CD4-positive, alpha-beta T cell (primary cell): ENCODE measurements at regions of chr5 and their contacts with region 1.

Region 1: GRCh38 chr5:141935538-141935937 is 11.9 kb downstream of the DELE1 start:
- DNase-seq: no peak
- ATAC-seq: no peak
- H3K4me3 ChIP-seq: no peak overlapping the region
- H3K4me3 Mint-ChIP-seq: no peak overlapping the region
- H3K27ac ChIP-seq: no peak overlapping the region
- H3K27ac Mint-ChIP-seq: no peak overlapping the region
- H3K4me1 ChIP-seq: no peaks in the 10 kb centered on the region
- H3K4me1 Mint-ChIP-seq: no peaks in the 10 kb centered on the region
- H3K27me3 ChIP-seq: no peaks in the 10 kb centered on the region
- H3K27me3 Mint-ChIP-seq: no peaks in the 10 kb centered on the region
- CTCF ChIP-seq: no peak

Region 2: GRCh38 chr5:141590127-141590526 is 345.4 kb before region 1 on chr5:
- CTCF ChIA-PET with region 1: no interaction called
- POLR2A ChIA-PET with region 1: no interaction called
- intact Hi-C with region 1: no loop called
- DNase-seq: peak in 1 of 14 experiments; percentile 24
- ATAC-seq: no peak
- H3K4me3 ChIP-seq: no peak overlapping the region
- H3K4me3 Mint-ChIP-seq: no peak overlapping the region
- H3K27ac ChIP-seq: no peak overlapping the region
- H3K27ac Mint-ChIP-seq: no peak overlapping the region
- H3K4me1 ChIP-seq: peaks cover 21% of the 10 kb centered on the region
- H3K4me1 Mint-ChIP-seq: peaks cover 73% of the 10 kb centered on the region
- H3K27me3 ChIP-seq: no peaks in the 10 kb centered on the region
- H3K27me3 Mint-ChIP-seq: no peaks in the 10 kb centered on the region
- CTCF ChIP-seq: no peak

Region 3: DNA sequence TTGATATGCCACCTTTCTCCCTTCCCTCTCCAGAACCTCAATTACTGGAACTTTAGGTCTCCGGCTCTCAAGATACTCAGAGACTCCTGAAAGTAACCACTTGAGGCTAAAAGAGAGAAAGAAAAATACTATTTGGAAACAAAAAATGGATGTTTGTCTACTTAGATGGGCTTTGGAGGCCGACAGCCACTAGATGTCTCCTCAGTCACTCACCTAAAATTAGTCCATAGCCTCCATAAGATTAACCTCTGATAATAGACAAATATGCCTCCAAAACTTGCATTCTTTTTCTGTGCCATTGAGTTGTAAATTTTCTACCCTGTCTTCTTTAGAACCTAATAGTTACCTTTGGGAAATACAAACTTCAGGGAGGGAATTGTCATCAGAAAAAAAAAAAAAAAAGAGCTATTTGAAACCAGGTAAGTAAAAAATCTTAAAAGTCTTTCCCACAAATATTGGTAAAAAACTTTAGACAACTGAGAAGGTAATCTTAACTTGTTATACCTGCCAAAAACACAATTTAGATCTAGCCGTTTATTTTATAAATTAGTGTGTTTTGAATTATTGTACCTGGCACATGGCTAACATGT is 46.2 kb before region 1 on chr5:
- CTCF ChIA-PET with region 1: no interaction called
- POLR2A ChIA-PET with region 1: no interaction called
- intact Hi-C with region 1: loop called in 1 of 2 experiments (anchors 5 kb)
- DNase-seq: no peak
- ATAC-seq: no peak
- H3K4me3 ChIP-seq: no peak overlapping the region
- H3K4me3 Mint-ChIP-seq: no peak overlapping the region
- H3K27ac ChIP-seq: no peak overlapping the region
- H3K27ac Mint-ChIP-seq: no peak overlapping the region
- H3K4me1 ChIP-seq: no peaks in the 10 kb centered on the region
- H3K4me1 Mint-ChIP-seq: no peaks in the 10 kb centered on the region
- H3K27me3 ChIP-seq: peaks cover 8 to 10% of the 10 kb centered on the region in 2 experiments
- H3K27me3 Mint-ChIP-seq: peaks cover 45% of the 10 kb centered on the region
- CTCF ChIP-seq: peak; percentile 8

Region 4: DNA sequence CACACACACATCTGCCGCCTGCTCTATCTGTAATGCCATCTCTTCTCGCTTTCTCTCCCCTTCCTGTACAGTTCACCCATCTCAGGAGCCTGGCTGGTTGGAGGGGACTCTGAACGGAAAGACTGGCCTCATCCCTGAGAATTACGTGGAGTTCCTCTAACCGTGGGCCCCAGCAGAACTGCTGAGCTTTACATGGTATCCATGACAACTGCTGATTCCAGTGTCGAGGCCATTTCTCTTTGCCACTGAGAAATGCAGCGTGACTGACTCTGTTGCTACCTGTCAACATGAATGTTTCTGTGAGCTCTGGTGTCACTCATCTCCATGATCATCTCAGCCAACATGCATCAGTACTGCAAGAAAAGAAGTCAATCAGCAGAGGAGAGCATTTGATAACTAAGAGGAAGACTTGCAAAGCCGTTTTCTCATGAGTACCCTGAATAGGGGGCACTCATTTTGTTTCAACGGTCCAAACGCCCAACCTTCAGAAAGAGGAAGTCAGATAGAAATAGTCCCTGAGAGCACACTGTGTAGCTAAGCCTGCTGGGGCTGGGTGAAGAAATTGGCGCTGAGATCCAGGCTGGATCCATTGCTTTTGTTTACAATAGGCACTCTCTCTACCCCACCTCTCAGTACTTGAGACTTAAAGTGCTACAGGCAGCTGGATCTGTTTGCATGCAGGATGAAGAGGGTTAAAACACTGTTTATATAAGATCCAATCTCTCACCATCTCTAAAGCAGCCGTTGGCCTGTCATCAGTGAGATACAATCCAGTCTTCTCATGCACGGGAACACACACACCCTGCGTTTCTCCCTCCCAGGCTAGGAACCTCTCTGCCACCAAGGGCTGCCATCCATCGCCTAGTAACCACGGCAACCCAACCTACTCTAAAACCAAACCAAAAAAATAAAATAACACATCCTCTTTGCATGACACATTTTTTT is 1287.0 kb after region 1 on chr5:
- CTCF ChIA-PET with region 1: no interaction called
- POLR2A ChIA-PET with region 1: no interaction called
- intact Hi-C with region 1: no loop called
- DNase-seq: peak in 13 of 14 experiments; percentile 25 to 91 (median 48)
- ATAC-seq: peak; percentile 82
- H3K4me3 ChIP-seq: peak overlapping the region; percentile 17
- H3K4me3 Mint-ChIP-seq: peak overlapping the region; percentile 52
- H3K27ac ChIP-seq: peak overlapping the region; percentile 46 to 85
- H3K27ac Mint-ChIP-seq: peak overlapping the region; percentile 87
- H3K4me1 ChIP-seq: peaks cover 37% of the 10 kb centered on the region
- H3K4me1 Mint-ChIP-seq: peaks cover 44% of the 10 kb centered on the region
- H3K27me3 ChIP-seq: no peaks in the 10 kb centered on the region
- H3K27me3 Mint-ChIP-seq: no peaks in the 10 kb centered on the region
- CTCF ChIP-seq: no peak